ENCODE measurements at regions of chr16 and their contacts with region 1.

Region 1: DNA sequence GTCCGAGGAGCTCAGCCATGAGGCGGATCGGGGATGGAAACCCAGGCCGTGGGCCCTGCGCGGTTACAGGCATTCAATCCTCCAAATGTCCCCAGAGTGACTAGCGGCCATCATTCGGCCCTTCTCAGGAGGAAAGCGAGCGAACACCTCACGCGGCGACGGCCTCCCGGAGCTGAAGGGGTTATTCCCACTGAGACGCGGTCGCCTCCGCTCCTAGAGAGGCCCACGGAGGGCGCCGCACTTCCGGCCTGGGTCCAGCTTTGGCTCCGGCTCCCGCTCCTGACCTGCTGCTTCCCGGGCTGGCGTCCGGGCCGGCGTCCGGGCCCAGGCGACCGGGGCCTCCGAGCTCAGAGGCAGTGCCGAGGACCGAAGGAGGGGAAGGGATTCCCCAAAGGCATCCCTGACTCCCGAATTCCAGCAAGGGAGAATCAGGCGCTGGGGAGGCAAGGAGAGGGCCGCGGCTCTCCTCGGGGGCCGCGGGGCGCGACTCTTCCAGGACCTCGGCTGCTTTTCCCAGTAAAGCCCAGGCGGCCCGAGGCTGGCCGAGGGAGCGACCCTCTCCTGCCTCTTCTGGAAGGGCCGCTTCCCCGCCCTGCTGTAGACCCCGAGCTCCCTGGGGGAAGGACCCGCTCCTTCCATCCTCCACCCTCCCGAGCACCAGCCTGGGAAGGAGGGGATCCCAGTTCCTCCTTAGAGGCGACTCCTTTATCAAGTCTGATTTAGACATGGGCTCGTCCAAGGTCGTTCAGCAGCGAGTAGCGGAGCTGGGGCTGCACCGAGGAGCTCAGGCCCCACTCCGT is 18.6 kb upstream of the ZNF629 start:
- DNase-seq: peak; percentile 83
- H3K4me3 ChIP-seq: peak overlapping the region; percentile 54 to 58
- H3K27ac ChIP-seq: peak overlapping the region; percentile 87 to 90
- H3K4me1 ChIP-seq: peaks cover 7% of the 10 kb centered on the region
- H3K27me3 ChIP-seq: no peaks in the 10 kb centered on the region
- CTCF ChIP-seq: peak in 2 of 4 experiments; percentile 13 to 20
- POLR2A ChIP-seq: peak; percentile 79

Region 2: GRCh38 chr16:30786936-30787612 is 18.5 kb before region 1 on chr16 and contains the start of gene ZNF629:
- intact Hi-C with region 1: loop called (anchors 1 kb)
- DNase-seq: peak; percentile 55
- H3K4me3 ChIP-seq: peak within 1 kb of the TSS; percentile 67 to 86
- H3K27ac ChIP-seq: peak within 1 kb of the TSS; percentile 79 to 80
- H3K4me1 ChIP-seq: no peaks in the 10 kb centered on the region
- H3K27me3 ChIP-seq: no peaks in the 10 kb centered on the region
- CTCF ChIP-seq: peak in 1 of 4 experiments; percentile 20
- POLR2A ChIP-seq: no peak
- total RNA-seq, gene ZNF629: 17.9 to 24.0 TPM

Region 3: DNA sequence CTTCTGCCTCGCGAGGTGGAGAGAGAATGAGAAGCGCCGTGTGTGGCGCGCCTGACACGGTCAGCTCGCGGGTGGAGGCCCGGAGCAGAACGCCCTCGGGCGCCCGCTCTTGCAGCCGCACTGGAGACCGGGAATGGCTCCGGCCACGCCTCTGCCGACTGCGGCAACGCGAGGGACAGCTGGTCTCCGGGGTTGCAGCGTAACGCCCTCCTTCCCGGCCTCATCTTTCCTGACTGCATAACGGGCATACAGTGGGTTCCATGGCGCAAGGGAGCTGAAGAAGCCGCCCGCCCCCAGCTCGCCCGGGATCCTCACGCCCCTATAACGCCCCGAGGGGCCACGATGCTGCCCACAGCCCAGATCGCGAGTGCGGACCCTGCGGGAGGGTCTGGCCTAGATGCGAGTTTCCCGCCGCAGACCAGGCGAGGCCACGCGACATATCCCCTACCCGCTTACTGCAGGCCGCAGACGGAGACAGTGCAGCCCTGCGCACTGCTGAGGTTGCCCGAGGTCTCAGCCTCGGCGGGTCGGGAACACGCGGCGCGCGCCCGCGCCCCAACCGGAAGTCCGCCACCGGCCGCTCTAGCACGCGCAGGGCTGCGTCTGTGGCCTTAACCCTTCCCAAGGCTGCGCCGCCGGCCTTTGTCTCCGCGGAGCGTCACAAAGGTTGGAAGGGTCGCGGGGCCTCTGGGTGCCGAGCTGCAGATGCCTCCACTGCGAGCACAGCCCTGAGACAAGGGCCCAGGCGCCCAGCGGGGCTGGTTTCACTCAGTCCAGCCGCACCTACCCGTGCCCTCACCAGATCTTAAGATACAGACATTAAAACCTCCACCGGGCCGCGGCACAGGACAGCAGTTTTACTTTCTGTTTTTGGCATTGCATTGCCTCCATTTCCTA is 69.5 kb after region 1 on chr16:
- intact Hi-C with region 1: loop called (anchors 2 kb)
- DNase-seq: peak; percentile 87
- H3K4me3 ChIP-seq: peak overlapping the region; percentile 74 to 75
- H3K27ac ChIP-seq: peak overlapping the region; percentile 83 to 89
- H3K4me1 ChIP-seq: peaks cover 9% of the 10 kb centered on the region
- H3K27me3 ChIP-seq: no peaks in the 10 kb centered on the region
- CTCF ChIP-seq: no peak
- POLR2A ChIP-seq: peak; percentile 84